Caco-2 (cell line): ENCODE measurements at regions of chr2 and their contacts with region 1.

Region 1: DNA sequence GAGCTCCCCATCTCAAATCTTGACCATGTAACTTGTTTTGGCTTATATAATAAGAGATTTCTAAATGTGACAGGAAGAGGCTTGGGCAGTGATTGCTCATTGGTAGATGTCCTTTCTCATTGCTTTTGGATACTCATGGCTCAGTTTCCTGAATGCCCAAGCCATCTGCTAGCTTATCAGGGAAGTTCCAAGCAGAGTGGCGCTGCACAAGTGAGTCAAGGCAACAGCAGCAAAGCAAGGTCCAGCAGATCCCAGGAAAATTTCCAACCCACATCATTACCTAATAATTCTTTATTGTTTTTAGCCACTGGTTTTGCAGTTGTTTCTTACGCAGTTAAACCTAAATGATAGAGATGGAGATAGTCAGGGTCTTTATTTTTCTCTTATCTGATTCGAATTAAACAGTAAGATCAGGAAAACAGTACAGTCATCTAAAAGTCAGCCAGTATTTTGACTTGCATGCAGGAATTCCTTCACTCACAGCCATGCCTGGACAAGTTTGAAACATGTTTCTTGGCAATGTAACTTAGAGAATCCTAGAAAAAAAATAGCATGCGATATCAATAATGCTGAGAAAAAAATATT is 349.7 kb upstream of the TMEFF2 start:
- DNase-seq: no peak
- H3K4me3 ChIP-seq: no peak overlapping the region
- H3K4me3 Mint-ChIP-seq: no peak overlapping the region
- H3K27ac Mint-ChIP-seq: no peak overlapping the region
- H3K4me1 ChIP-seq: peaks cover 7% of the 10 kb centered on the region; the same call in 1 of the 2 replicates
- H3K4me1 Mint-ChIP-seq: peaks cover 6% of the 10 kb centered on the region
- H3K27me3 ChIP-seq: no peaks in the 10 kb centered on the region
- H3K27me3 Mint-ChIP-seq: no peaks in the 10 kb centered on the region
- CTCF ChIP-seq: no peak

Region 2: GRCh38 chr2:192578780-192579179 is 34.3 kb after region 1 on chr2:
- CTCF ChIA-PET with region 1: no interaction called
- POLR2A ChIA-PET with region 1: no interaction called
- intact Hi-C with region 1: loop called (anchors 2 kb)
- DNase-seq: peak in 1 of 2 experiments; percentile 48
- H3K4me3 ChIP-seq: no peak overlapping the region
- H3K4me3 Mint-ChIP-seq: no peak overlapping the region
- H3K27ac Mint-ChIP-seq: peak overlapping the region; percentile 46
- H3K4me1 ChIP-seq: peaks cover 11% of the 10 kb centered on the region
- H3K4me1 Mint-ChIP-seq: peaks cover 15% of the 10 kb centered on the region
- H3K27me3 ChIP-seq: no peaks in the 10 kb centered on the region
- H3K27me3 Mint-ChIP-seq: no peaks in the 10 kb centered on the region
- CTCF ChIP-seq: no peak

Region 3: DNA sequence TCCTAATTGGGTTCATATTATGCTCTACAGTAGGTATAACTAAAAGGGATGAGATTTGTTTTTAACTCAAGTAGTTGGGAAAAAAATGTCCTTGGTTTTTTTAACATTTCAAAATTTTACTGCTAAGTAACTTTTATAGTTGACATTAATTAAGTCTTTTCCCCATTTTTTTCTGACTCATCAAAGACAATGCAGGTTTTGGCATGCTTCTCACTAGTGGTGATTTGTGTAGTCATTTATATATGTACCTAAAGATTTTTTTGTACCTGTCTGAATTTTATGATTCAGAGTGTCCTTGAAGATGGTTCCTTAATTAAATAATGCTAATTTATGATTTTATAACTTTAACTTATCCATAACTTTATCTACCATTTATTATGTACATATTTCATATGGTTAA is 532.5 kb after region 1 on chr2:
- CTCF ChIA-PET with region 1: no interaction called
- POLR2A ChIA-PET with region 1: no interaction called
- intact Hi-C with region 1: no loop called
- DNase-seq: no peak
- H3K4me3 ChIP-seq: no peak overlapping the region
- H3K4me3 Mint-ChIP-seq: no peak overlapping the region
- H3K27ac Mint-ChIP-seq: no peak overlapping the region
- H3K4me1 ChIP-seq: no peaks in the 10 kb centered on the region
- H3K4me1 Mint-ChIP-seq: no peaks in the 10 kb centered on the region
- H3K27me3 ChIP-seq: no peaks in the 10 kb centered on the region
- H3K27me3 Mint-ChIP-seq: peaks cover 2% of the 10 kb centered on the region
- CTCF ChIP-seq: no peak